ENCODE measurements at regions of chr2 and their contacts with region 1.

Region 1: DNA sequence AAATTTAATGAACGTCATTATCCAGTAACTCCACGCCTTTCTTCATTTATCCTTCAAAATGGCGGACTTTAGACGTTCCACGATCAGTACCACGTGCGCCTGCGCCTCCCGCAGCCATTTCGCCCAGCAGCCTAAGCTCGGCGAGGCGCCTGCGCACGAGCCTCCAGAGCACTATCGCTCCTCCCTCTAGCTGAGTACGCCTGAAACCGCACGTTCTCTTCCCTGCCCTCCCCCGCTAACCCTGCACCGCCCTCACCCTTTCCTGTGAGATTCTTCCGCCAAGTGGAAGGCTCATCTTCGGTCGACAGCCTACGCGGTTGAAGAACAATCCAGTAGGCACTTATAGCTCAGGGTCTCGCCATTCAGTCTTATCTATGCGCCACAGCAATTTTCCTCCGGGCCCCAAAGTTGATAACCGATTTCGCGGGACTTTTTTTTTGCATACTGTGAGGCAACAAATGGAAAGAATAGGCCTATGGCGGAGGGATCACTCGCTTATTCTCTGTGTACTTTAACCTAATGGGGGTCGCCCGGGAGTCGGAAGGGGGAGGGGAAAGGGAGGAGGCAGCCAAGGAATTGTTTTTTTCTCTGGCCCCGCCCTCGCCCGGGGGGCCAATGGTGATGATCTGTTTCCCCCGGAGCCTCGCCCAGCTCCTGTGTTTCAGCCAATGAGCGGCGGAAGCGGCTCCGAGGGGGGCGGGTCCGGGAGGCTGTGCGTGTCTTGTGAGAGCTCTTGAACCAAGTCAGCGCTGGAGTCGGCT is at the start of gene KDM3A:
- DNase-seq: peak; percentile 96 to 99 (median 98)
- H3K4me3 ChIP-seq: peak within 1 kb of the TSS; percentile 52 to 90 (median 75)
- H3K27ac ChIP-seq: peak within 1 kb of the TSS; percentile 76 to 99 (median 95)
- H3K27me3 ChIP-seq: no peaks in the 10 kb centered on the region
- CTCF ChIP-seq: peak in 19 of 56 donors; percentile 2 to 37 (median 12)
- total RNA-seq, gene KDM3A: 38.5 to 96.1 (median 60.5) TPM

Region 2: GRCh38 chr2:86105252-86105968 is 335.4 kb before region 1 on chr2 and contains the start of gene POLR1A:
- intact Hi-C with region 1: no loop called
- DNase-seq: peak; percentile 82 to 96 (median 94)
- H3K4me3 ChIP-seq: peak within 1 kb of the TSS; percentile 65 to 100 (median 93)
- H3K27ac ChIP-seq: peak within 1 kb of the TSS; percentile 68 to 98 (median 92)
- H3K27me3 ChIP-seq: no peaks in the 10 kb centered on the region
- CTCF ChIP-seq: peak in 14 of 56 donors; percentile 3 to 24 (median 11)
- total RNA-seq, gene POLR1A: 24.2 to 44.6 (median 34.2) TPM

Region 3: DNA sequence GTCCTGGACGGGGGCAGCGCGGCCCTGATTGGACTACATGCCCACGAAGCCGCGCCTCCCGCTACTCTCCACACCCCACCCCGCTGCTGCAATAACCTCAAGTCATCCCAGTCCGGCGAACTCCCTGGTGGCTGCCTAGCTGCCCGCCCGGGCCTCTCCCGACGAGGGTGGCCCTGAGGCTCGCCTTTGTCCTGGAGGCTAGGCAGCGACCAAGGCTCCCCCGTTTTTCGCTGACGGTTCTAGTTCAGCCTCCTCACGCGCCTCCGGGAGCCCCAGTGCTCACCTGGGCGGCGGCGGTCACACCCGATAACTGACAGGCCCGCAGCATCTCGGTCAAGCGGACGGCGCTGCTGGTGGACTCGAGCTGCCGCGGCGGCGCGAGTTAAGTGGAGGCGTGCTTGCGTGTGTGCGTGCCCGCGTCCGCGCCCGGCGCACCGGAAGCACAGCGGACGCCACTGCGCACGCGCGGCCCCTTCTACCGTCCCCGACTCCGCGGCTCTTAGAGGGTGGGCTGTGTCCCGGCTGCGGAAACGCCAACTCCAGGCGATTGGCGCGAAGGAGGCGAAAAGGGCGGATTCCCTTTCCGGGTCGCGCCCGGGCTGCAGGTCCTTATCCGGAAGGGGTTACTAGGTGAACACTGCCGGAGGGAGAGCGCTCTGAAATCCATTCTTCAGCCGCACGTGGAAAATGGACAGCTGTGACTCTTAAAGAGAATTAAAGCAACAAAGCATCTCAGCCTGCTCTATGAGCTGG is 245.6 kb before region 1 on chr2 and contains the start of gene IMMT:
- intact Hi-C with region 1: loop called in 1 of 2 experiments (anchors 5 kb)
- DNase-seq: peak; percentile 92 to 99 (median 96)
- H3K4me3 ChIP-seq: peak within 1 kb of the TSS; percentile 57 to 100 (median 97)
- H3K27ac ChIP-seq: peak within 1 kb of the TSS; percentile 63 to 99 (median 97)
- H3K27me3 ChIP-seq: no peaks in the 10 kb centered on the region
- CTCF ChIP-seq: peak in 28 of 56 donors; percentile 6 to 44 (median 22)
- total RNA-seq, gene IMMT: 46.6 to 117 (median 78.3) TPM

Region 4: GRCh38 chr2:86480105-86480504 is 39.3 kb after region 1 on chr2:
- intact Hi-C with region 1: loop called in 1 of 2 experiments (anchors 5 kb)
- DNase-seq: peak in 8 of 10 donors; percentile 18 to 71 (median 62)
- H3K4me3 ChIP-seq: peak overlapping the region in 22 of 59 donors; percentile 1 to 41 (median 24)
- H3K27ac ChIP-seq: peak overlapping the region in 51 of 59 donors; percentile 16 to 88 (median 64)
- H3K27me3 ChIP-seq: no peaks in the 10 kb centered on the region
- CTCF ChIP-seq: no peak

Region 5: GRCh38 chr2:86562922-86563649 is 122.3 kb after region 1 on chr2 and contains the start of gene CHMP3:
- intact Hi-C with region 1: loop called (anchors 1 to 5 kb)
- DNase-seq: peak; percentile 88 to 96 (median 94)
- H3K4me3 ChIP-seq: peak within 1 kb of the TSS; percentile 52 to 95 (median 83)
- H3K27ac ChIP-seq: peak within 1 kb of the TSS; percentile 91 to 100 (median 99)
- H3K27me3 ChIP-seq: no peaks in the 10 kb centered on the region
- CTCF ChIP-seq: peak in 13 of 56 donors; percentile 7 to 39 (median 12)
- total RNA-seq, gene CHMP3: 70.7 to 207 (median 128) TPM

Measured in dorsolateral prefrontal cortex (tissue), 120 donors.